Activated T-helper 1 cell treated with anti-CD3 and anti-CD28 coated beads, Interleukin-12 subunit alpha, Interleukin-12 subunit beta, Interleukin-2, Interleukin-4 antibody, amounts not matched to agents 30 ng/mL and 10 ng/mL and 1 ng/mL, durations not matched to agents 14 hours and 24 hours and 36 hours (primary cell): ENCODE measurements at regions of chr12 and their contacts with region 1.

Region 1: DNA sequence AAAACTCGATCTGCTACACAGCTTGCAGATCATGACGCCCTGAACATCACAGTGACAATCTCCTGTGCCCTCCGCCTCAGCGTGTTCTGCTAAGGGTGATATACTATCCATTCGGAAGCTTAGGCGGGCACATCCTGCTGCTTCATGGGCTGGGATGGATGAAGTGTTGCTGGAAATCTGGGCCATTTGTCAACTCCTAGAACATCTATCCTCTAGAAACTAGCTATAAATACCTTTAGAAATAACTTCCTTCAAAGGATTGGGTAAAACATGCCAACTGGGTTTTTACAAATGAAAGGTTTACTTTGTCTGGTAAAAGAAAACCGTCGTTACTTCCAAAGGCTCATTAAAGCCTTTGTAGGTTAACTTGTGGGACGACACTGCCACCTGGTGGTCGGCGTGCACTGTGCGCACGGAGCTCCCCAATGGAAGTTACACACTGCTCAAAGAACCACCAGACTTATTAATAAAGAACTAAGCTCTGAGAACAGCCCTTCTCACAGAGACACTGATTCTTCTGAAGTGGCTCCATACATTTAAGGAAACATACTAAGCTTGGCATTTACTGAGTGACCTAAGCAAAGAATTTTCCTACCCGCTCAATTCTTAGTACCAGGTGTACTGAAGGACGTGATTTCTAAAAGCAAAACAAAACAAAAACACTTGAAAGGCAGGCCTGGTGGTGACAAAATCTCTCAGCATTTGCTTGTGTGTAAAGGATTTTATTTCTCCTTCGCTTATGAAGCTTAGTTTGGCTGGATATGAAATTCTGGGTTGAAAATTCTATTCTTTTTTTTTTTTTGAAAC is 21.6 kb upstream of the CACNA2D4 start:
- DNase-seq: peak; percentile 74
- H3K4me3 Mint-ChIP-seq: no peak overlapping the region
- H3K27ac Mint-ChIP-seq: no peak overlapping the region
- H3K4me1 Mint-ChIP-seq: peaks cover 6% of the 10 kb centered on the region
- H3K27me3 Mint-ChIP-seq: no peaks in the 10 kb centered on the region

Region 2: DNA sequence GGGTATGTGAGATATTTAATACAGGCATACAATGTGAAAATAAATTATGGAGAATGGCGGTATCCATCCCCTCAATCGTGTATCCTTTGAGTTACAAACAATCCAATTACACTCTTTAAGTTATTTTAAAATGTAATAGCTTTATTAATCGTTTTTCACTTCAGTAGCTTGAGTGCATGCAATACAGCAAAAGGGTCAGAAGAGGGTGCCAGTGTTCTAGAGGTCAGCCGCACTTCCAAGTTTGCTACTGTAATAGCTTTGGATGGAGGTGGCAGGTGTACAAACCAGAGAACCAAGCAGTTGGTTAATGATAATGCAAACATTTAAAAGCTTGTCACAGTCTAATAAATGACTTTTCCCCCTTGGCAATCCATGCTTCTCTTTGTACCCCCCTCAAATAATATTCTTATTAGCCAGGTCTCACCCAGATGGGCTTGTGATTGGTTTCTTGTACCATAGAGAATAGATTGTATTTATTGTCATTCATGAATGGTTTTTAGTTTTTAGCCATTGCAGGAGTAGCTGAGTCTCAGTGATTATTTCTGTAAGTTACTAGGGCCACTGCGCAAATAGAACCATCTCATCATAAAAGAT is 821.9 kb before region 1 on chr12:
- intact Hi-C with region 1: loop called (anchors 2 kb)
- DNase-seq: peak; percentile 52
- H3K4me3 Mint-ChIP-seq: no peak overlapping the region
- H3K27ac Mint-ChIP-seq: no peak overlapping the region
- H3K4me1 Mint-ChIP-seq: peaks cover 6% of the 10 kb centered on the region
- H3K27me3 Mint-ChIP-seq: no peaks in the 10 kb centered on the region

Region 3: DNA sequence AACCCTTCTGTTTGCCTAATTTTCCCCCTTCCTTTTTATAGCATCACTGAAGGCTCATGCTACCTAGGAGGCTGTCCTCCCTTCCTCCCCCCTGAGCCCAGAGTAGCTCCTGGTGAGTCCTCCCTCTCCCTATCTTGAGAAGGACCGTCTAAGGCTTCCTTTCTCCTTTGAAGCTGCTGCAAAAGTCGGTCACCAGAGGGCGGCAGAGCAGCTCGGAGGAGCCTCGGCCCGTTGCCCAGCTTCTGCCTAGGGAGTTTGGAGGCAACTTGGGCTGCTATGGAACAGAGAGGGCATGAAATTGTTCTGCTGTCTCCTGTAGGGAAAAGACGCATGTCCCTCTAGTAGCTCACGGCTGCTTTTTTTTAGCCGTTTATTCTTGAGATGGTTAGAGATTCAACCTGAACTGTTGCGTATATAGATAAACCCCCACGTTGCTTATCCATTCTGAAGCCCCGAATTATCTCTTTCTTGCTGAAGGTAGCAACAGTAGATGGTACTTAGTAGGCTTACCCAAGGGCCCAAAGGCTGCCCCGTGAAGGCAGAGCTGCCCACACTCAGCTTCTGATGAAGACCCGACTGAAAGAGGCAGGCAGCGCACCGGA is 305.3 kb before region 1 on chr12:
- intact Hi-C with region 1: loop called (anchors 2 kb)
- DNase-seq: peak; percentile 30
- H3K4me3 Mint-ChIP-seq: no peak overlapping the region
- H3K27ac Mint-ChIP-seq: no peak overlapping the region
- H3K4me1 Mint-ChIP-seq: peaks cover 8% of the 10 kb centered on the region
- H3K27me3 Mint-ChIP-seq: peaks cover 40% of the 10 kb centered on the region

Region 4: GRCh38 chr12:1651946-1652345 is 288.1 kb before region 1 on chr12:
- intact Hi-C with region 1: loop called (anchors 1 kb)
- DNase-seq: no peak
- H3K4me3 Mint-ChIP-seq: no peak overlapping the region
- H3K27ac Mint-ChIP-seq: no peak overlapping the region
- H3K4me1 Mint-ChIP-seq: no peaks in the 10 kb centered on the region
- H3K27me3 Mint-ChIP-seq: peaks cover 29% of the 10 kb centered on the region

Region 5: DNA sequence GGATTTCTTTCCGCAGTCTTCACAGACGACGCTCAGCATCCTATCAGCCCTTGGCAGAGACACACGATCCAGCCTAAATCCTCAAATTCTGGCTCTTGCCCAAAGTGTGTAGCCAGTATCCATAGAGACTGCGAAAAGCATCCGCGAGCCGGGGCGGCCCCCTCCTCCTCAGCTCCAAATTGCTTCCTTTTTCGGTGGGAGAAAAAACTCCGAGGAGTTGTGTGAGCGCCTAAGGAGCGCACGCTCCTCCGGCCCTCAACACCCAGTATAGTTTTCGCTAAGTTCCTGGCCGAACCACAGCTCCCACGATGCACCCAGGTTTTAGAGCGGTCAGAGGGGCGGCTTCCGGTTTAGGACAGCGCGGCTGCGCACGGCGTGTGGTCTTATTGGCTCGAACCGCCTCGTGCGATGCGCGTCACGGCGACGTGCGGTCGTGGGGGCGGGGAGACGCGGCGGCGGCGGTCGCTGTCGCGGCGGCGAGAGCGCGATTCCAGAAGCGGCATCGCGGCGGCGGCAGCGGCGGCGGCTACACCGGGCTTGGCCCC is 249.4 kb before region 1 on chr12 and contains the start of gene ADIPOR2:
- intact Hi-C with region 1: loop called (anchors 1 kb)
- DNase-seq: peak; percentile 93
- H3K4me3 Mint-ChIP-seq: peak within 1 kb of the TSS; percentile 99
- H3K27ac Mint-ChIP-seq: peak within 1 kb of the TSS; percentile 96
- H3K4me1 Mint-ChIP-seq: peaks cover 50% of the 10 kb centered on the region
- H3K27me3 Mint-ChIP-seq: peaks cover 3% of the 10 kb centered on the region
- total RNA-seq, gene ADIPOR2: 69.4 and 75.2 TPM in 2 replicates

Region 6: DNA sequence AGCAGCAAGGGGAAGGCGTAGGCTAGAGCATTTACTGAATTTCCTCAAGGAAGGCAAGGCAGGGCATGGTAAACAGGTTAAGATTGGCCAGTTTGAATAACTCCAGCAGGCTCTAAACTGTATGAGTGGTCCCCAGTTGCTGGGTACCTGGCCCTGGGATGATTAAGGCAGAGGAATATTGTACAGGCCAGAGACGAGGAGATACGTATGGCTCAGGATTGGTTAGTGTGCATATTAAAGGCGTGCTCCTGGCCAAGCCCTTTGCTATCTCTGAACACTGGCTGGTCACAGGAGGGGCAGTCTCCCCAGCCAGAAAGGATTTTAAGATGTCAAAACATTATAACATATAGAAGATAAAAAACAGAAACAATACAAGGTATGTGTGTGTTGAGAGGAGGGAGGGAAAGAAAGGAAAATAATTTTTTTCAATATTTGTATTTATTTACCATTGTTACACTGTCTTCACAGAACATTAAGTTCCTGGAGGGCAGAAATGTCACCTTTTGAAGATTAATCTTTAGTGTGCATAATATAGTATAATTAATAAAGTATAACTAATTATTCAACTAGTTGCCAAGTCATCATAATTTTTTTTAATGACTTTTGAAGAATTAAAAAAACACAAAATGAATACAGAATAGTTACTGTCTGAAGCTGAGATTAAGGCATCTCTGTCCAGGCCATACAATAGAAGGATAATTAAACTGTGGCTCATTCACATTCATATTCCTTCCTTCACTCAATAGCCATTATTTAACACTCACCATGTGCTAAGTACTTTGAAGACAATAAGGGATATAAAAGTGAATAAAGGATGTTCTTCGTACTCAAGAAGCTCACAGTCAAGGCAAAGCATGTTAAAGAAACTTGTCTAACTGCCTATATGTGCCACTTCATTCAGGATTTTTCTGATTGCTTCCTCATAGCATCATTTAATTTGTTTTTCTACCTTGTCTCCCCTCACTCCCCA is 22.3 kb after region 1 on chr12:
- intact Hi-C with region 1: no loop called
- DNase-seq: no peak
- H3K4me3 Mint-ChIP-seq: no peak overlapping the region
- H3K27ac Mint-ChIP-seq: no peak overlapping the region
- H3K4me1 Mint-ChIP-seq: no peaks in the 10 kb centered on the region
- H3K27me3 Mint-ChIP-seq: no peaks in the 10 kb centered on the region

Region 7: DNA sequence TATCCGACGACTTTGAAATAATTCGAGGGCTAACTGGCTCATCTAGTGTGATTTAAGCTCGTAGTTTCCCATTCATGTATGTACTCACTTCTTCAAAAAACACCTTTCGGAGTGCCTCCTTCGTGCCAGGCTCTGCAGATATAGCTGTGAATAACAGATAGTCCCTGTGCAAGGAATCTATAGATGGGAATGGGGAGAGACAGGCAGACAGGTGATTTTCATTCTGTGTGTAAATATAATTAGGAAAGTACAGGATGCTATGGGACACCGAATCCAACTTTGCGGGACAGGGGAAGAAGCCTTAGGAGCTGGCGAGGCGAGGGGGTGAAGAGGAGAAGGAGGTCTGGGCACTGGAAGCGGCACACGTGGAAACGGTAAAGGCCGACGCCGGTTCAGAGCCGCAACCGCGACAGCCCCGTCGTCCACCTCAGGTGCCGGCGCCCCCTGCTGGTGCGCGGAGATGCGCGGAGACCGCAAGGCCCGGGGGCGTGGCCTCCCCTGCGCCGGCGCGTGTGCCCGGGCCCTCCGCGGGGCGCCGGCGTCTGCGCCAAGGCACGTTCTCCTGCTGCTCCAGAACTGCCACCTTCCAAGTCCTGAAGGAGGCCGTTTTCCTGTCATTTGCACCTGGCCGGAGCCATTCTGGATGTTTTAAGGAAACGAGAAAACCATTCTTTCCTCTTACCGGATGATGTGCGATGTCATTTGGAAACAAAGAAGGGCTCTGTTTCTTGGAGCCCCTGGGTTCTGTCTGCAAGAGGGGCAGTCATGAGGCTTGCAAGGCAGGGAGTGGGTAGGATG is 94.8 kb after region 1 on chr12:
- intact Hi-C with region 1: loop called (anchors 1 kb)
- DNase-seq: peak; percentile 78
- H3K4me3 Mint-ChIP-seq: peak overlapping the region; percentile 53
- H3K27ac Mint-ChIP-seq: no peak overlapping the region
- H3K4me1 Mint-ChIP-seq: peaks cover 14% of the 10 kb centered on the region
- H3K27me3 Mint-ChIP-seq: peaks cover 52% of the 10 kb centered on the region